Activated CD8-positive, alpha-beta memory T cell treated with anti-CD3 and anti-CD28 coated beads, Interleukin-2, amount 10 ng/mL, durations not matched to agents 7 days and 5 days (primary cell): ENCODE measurements at regions of chr18 and their contacts with region 1.

Region 1: DNA sequence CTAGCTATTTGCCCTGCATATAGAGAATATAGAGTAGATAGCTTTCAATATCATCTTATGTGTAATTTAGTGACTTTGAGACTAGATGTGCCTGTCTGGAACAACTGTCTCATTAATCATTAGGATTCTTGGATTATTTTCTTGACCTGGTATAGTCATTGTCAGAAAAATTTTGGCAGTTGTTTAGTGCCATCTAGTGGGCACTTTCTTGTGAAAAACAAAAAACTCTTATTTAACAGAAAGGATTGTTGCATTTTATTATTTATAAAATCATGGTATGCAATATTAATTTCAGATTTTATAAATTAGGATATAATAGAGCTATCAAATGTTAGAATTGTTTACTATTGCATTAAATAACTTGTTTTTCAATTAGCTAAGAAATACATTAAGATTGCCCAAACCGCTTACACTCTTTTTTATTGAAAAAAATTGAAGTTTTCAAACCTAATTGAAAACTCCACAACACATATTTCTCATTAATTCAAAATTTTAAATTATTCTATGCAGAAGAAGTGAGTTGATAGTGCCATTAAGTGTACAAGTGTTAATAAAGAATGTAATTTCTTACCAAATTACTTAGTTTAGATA is 80.3 kb downstream of the DYNAP start:
- DNase-seq: no peak
- ATAC-seq: no peak
- H3K4me3 Mint-ChIP-seq: no peak overlapping the region
- H3K27ac Mint-ChIP-seq: no peak overlapping the region
- H3K4me1 Mint-ChIP-seq: no peaks in the 10 kb centered on the region
- H3K27me3 Mint-ChIP-seq: peaks cover 9% of the 10 kb centered on the region

Region 2: GRCh38 chr18:54392543-54393023 is 278.8 kb before region 1 on chr18:
- CTCF ChIA-PET with region 1: interaction called, 17 read pairs
- DNase-seq: no peak
- ATAC-seq: peak; percentile 67
- H3K4me3 Mint-ChIP-seq: no peak overlapping the region
- H3K27ac Mint-ChIP-seq: no peak overlapping the region
- H3K4me1 Mint-ChIP-seq: peaks cover 17% of the 10 kb centered on the region
- H3K27me3 Mint-ChIP-seq: peaks cover 21% of the 10 kb centered on the region

Region 3: DNA sequence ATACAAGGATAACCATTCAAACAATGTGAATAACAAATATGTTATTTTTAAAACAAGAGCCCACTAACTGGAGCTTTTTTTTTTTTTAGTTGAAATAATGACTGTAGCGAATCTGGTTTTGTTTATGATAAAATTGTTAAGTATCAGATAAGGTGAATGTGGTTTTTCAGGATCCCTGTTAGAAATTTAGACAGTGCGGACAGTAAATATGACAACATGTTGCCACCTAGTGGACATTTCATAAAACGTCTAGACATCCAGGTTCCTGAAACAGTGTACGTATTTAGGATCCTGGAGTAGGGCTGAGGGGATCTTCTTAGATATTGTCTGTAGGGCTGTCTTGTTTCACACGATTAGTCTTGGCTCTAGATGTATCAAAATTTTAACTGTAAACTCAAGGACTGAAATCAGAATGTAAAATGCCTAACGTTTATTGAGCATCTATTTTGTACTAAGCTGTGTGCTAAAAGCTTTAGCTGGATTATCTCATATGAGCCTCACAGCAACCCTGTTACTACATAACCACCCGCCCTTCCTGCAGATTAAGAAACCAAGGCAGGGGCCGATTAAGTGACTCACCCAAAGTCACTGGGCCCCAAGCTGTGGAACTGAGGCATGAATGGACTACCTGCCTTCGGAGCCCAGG is 311.8 kb after region 1 on chr18:
- CTCF ChIA-PET with region 1: interaction called, 11 read pairs
- DNase-seq: no peak
- ATAC-seq: peak; percentile 78
- H3K4me3 Mint-ChIP-seq: no peak overlapping the region
- H3K27ac Mint-ChIP-seq: no peak overlapping the region
- H3K4me1 Mint-ChIP-seq: no peaks in the 10 kb centered on the region
- H3K27me3 Mint-ChIP-seq: peaks cover 22% of the 10 kb centered on the region

Region 4: GRCh38 chr18:55220523-55220922 is 549.1 kb after region 1 on chr18:
- CTCF ChIA-PET with region 1: no interaction called
- DNase-seq: no peak
- ATAC-seq: no peak
- H3K4me3 Mint-ChIP-seq: no peak overlapping the region
- H3K27ac Mint-ChIP-seq: no peak overlapping the region
- H3K4me1 Mint-ChIP-seq: no peaks in the 10 kb centered on the region
- H3K27me3 Mint-ChIP-seq: no peaks in the 10 kb centered on the region